ENCODE measurements at regions of chr4 and their contacts with region 1.

Region 1: DNA sequence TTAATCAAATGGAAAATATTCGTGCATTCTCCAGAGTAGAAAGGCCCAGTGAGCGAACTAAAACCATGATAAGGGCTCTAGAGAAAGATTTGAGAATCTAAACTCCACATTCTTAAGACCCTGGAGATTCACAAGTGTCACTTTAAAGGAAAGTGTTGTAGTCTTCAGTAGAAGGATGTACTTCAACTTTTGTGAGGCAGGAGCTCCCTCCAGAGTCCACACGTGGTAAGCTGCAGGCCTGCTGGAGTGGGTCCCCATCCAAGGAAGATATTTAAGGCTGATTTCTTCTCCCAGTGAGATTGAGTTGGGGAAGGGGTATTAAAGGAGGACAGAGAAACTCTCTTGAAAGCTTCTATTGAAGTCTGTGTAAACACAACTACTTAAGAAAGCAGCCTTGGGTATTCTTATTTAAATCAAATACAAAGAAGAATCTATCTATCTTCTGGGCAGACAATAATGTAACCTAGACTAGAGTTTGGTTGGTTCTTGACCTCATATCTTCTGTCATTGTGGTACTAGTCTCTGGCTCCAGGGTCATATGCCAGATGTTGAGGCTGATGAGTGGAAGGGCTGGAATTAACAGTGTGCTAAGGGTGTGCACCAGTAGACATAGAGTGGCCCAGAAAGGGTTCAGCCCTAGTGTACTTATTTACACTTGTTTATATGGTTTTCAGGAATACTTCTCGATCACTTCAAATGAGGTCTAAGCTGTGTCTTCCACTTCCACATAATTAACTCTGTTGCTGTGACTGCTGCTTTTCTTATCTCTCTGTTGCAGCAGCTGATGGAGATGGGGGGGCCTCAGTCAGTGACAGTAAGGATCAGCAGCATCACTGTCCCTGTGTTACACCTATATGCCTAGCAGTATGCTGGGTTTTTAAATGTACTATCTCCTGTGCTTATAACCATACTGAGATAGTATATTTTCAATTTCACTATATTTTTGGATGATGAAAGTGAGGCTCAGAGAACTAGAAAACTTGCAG is 76.1 kb downstream of the HMGB2 start:
- DNase-seq: no peak

Region 2: DNA sequence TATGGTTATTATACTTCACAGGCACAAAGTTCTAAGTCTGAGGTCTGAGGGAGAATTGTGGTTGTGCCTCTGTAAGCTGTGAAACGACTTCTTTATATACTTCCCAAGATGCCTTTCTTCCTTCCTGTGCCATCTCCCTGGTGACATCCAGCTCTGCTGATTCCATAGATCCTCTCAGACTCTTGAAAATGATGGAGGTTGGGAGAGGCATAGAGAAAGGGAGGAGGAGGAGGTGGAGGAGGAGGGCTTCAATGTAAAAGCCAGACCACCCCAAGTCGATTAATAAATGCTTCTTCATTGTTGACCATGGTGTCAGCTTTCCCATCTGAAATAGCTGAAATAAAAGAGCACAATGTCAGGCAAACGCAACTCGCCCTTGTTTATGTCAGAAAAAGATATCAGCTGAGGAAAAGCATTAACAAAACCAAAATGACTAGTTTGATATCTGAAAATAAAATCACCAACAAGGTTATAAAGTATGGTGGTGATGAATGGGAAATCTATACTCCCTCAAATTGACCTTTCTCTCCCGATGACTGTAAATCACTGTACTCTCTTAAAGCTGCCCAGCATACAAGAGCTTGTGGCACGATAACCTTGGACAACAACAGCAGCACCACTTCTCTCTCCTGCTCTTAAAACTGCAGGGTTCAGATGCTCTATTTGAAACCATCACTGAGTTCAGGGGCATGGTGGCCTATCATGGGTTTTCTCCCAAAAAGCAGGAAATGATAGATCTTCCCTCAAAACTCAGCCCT is 319.8 kb before region 1 on chr4:
- intact Hi-C with region 1: no loop called
- DNase-seq: no peak

Region 3: GRCh38 chr4:173013232-173013930 is 244.6 kb before region 1 on chr4:
- intact Hi-C with region 1: loop called (anchors 2 kb)
- DNase-seq: no peak

Region 4: GRCh38 chr4:173025131-173025530 is 232.9 kb before region 1 on chr4:
- intact Hi-C with region 1: loop called (anchors 1 kb)
- DNase-seq: no peak

Region 5: DNA sequence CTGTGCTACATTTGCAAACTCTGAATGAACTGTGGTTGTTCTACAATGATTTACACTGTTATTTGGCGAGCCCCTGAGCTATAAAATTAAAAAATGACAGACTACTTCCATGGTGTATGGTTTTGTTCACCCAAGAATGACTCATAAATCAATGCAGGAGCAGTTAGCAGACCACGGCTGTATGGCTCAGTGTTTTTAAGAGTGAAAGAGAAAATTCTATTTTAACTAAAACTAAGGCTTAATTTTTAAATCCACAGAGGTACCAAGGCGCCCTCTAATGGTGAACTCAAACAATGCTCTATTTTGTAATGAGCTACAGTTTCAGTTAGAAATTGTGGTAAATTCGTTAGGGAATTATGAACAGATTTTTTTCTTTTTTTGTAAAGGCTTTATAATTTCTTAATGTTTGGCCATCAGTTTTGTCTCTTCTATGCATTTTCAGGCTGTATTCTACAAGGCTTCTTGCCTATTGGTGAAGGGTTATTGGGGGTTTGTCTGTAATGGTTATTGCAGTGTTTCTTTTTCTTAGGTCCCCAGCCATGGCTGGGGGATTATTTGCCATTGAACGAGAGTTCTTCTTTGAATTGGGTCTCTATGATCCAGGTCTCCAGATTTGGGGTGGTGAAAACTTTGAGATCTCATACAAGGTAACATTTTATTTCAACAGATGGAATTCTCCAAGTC is 43.6 kb after region 1 on chr4:
- intact Hi-C with region 1: no loop called
- DNase-seq: no peak

Measured in cardiac septum (tissue), 1 donor.